Activated CD8-positive, alpha-beta T cell treated with anti-CD3 and anti-CD28 coated beads for 36 hours (primary cell): ENCODE measurements at regions of chr9 and their contacts with region 1.

Region 1: GRCh38 chr9:125558453-125559092 is 148.4 kb downstream of the MAPKAP1 start:
- DNase-seq: peak; percentile 77
- ATAC-seq: peak; percentile 84
- H3K4me3 Mint-ChIP-seq: no peak overlapping the region
- H3K27ac Mint-ChIP-seq: no peak overlapping the region
- H3K4me1 Mint-ChIP-seq: peaks cover 17% of the 10 kb centered on the region
- H3K27me3 Mint-ChIP-seq: no peaks in the 10 kb centered on the region
- CTCF ChIP-seq: peak; percentile 86

Region 2: DNA sequence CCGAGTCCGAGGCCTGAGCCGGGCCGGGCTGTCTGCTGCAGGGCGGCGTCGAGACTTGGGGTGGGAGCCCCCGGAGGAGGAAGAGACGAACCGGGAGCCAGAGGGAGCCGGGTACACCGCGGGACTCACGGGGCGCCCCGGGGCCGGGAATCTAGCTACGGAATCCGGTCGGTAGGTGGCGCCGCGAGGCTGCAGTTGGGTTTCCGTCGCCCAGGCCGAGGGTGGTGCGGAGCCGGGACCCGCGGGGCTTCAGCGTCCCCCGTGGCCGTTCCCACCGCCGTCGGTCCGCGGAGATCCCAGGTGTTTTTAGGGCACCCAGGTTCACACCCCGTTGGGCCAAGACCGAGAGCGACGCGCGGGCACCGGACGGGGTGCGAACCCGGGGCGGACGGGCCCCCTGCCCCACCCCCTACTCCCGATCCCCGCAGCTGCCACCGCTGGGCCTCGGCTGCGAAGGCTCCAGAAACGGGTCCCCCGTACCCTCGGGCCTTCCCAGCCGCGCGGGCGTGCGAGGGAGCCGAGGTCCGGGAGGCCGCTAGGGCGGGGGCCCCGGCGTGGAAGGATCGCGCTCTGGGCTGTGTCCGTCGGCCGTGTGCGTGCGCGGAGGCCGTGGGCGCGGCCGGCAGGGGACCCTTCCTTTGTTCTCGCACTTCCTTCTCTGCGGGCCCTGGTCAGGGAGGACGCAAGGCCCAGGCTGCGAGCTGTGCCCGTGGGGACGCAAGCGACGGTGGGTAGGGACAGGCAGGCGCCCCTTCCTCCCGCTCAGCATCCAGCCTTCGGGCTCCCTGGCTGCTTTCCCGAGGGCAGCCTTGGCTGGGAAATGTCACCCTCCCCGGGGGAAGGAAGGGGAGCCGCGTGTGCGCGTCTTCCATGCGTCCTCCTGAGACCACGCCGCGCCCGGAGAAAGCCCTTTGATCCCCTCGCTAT is 150.3 kb before region 1 on chr9:
- CTCF ChIA-PET with region 1: interaction called, 11 read pairs
- POLR2A ChIA-PET with region 1: no interaction called
- intact Hi-C with region 1: no loop called
- DNase-seq: peak; percentile 84
- ATAC-seq: peak; percentile 81
- H3K4me3 Mint-ChIP-seq: peak overlapping the region; percentile 59
- H3K27ac Mint-ChIP-seq: no peak overlapping the region
- H3K4me1 Mint-ChIP-seq: peaks cover 14% of the 10 kb centered on the region
- H3K27me3 Mint-ChIP-seq: peaks cover 16% of the 10 kb centered on the region
- CTCF ChIP-seq: peak; percentile 99

Region 3: DNA sequence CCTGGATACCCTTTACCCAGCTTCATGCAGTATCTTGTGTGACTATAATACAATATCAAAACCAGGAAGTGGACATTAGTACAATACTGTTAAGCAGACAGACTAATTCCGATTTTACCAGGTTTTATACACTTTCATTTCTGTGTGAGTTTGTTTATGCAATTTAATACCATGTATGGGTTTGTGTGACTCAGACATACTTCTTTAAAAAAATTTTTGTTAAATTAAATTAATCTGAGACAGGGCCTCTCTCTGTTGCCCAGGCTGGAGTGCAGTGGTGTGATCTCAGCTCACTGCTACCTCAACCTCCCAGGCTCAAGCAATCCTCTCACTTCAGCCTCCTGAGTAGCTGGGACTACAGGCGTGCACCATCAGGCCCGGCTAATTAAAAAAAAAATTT is 140.2 kb before region 1 on chr9:
- CTCF ChIA-PET with region 1: no interaction called
- POLR2A ChIA-PET with region 1: no interaction called
- intact Hi-C with region 1: no loop called
- DNase-seq: no peak
- ATAC-seq: no peak
- H3K4me3 Mint-ChIP-seq: no peak overlapping the region
- H3K27ac Mint-ChIP-seq: no peak overlapping the region
- H3K4me1 Mint-ChIP-seq: no peaks in the 10 kb centered on the region
- H3K27me3 Mint-ChIP-seq: no peaks in the 10 kb centered on the region
- CTCF ChIP-seq: no peak

Region 4: GRCh38 chr9:125529589-125530515 is 28.7 kb before region 1 on chr9:
- CTCF ChIA-PET with region 1: interaction called, 15 read pairs
- POLR2A ChIA-PET with region 1: no interaction called
- intact Hi-C with region 1: no loop called
- DNase-seq: no peak
- ATAC-seq: peak; percentile 47
- H3K4me3 Mint-ChIP-seq: no peak overlapping the region
- H3K27ac Mint-ChIP-seq: peak overlapping the region; percentile 6
- H3K4me1 Mint-ChIP-seq: peaks cover 48% of the 10 kb centered on the region
- H3K27me3 Mint-ChIP-seq: no peaks in the 10 kb centered on the region
- CTCF ChIP-seq: no peak

Region 5: GRCh38 chr9:125568621-125569020 is 10.0 kb after region 1 on chr9:
- CTCF ChIA-PET with region 1: interaction called, 20 read pairs
- POLR2A ChIA-PET with region 1: no interaction called
- intact Hi-C with region 1: no loop called
- DNase-seq: no peak
- ATAC-seq: no peak
- H3K4me3 Mint-ChIP-seq: no peak overlapping the region
- H3K27ac Mint-ChIP-seq: no peak overlapping the region
- H3K4me1 Mint-ChIP-seq: peaks cover 14% of the 10 kb centered on the region
- H3K27me3 Mint-ChIP-seq: no peaks in the 10 kb centered on the region
- CTCF ChIP-seq: no peak

Region 6: DNA sequence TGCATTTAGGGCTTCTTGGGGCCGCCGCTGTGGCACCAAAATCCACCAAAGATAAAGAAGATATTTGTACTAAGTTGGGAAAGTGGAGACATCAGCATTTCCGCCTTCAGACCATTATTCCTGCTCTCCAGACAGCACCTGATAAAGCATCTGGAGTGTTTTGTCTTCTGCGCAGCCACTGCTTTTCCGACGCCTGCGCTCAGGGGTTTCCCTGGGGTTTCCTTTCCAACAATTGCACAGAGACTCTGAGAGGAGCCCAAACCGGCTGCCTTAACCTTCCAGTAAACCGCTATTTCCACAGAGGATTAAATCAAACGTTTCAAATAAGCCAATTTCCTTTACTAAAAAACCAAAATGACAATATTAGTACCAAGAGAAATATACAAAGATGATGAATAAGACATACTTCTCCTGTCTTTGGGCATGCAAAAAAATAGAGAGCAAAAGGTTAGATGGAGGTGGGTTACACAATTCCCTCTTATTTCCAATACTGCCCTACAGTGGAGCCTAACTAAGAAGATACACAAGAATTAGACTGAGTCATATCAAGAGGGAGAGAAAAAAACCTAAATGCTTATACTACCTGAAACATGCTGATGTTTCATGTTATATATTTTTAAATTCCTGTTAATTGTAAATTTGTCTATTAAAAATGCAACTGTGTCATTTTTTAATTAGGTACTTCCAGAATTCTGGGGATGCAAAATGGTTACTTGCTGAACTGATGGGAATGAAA is 50.1 kb after region 1 on chr9:
- CTCF ChIA-PET with region 1: no interaction called
- POLR2A ChIA-PET with region 1: no interaction called
- intact Hi-C with region 1: no loop called
- DNase-seq: no peak
- ATAC-seq: no peak
- H3K4me3 Mint-ChIP-seq: no peak overlapping the region
- H3K27ac Mint-ChIP-seq: peak overlapping the region; percentile 82
- H3K4me1 Mint-ChIP-seq: peaks cover 41% of the 10 kb centered on the region
- H3K27me3 Mint-ChIP-seq: no peaks in the 10 kb centered on the region
- CTCF ChIP-seq: no peak

Region 7: DNA sequence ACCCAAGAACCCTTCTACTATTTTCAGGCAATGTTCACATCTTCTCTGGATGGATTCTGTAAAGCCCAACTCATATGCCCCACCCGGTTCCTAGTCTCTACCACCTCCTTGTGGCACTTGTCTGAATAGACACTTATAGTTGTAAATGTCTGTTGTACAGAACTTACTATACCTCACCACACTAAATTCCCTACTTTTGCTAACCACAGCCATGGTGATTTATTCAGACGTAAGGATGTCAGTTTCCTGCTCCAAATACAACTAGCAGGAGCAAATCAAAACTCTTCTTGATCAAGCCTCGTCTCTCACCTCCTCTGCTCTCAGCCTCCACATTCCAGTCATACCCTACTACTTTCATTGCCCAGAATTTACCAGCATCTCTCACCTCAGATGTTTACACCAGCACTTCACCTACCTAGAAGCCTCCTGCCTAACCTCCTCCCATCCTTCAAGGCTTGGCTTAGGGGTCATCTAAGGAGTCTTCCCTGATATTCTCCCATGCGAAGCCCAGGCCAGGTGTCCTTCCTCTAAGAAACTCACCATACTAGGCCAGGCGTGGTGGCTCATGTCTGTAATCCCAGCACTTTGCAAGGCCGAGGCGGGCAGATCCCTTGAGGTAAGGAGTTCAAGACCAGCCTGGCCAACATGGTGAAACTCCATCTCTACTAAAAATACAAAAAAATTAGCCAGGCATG is 73.0 kb after region 1 on chr9:
- CTCF ChIA-PET with region 1: interaction called, 15 read pairs
- POLR2A ChIA-PET with region 1: no interaction called
- intact Hi-C with region 1: loop called (anchors 2 kb)
- DNase-seq: peak; percentile 48
- ATAC-seq: peak; percentile 50
- H3K4me3 Mint-ChIP-seq: no peak overlapping the region
- H3K27ac Mint-ChIP-seq: peak overlapping the region; percentile 74
- H3K4me1 Mint-ChIP-seq: peaks cover 80% of the 10 kb centered on the region
- H3K27me3 Mint-ChIP-seq: no peaks in the 10 kb centered on the region
- CTCF ChIP-seq: peak; percentile 80

Region 8: DNA sequence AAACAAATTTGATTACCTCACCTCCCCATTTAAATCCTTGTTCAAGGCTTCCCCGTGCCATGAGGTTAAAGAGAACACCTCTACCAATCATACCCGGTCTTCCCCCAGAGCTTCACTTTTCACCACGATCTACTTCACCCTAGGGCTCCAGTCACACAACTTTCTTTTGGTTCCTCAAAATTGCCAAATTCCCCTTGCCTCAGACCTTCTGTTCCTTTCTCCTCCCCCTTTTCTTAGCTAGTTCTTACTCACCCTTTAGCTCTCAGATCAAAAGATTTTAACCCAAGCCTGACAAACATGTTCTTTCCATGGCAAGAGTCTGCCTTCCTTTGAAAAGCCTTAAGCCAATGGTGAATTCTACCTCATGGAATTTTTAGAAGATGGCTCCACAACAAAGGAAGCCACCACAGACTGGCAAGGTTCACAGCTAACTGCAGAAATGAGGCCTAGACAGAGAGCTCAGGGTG is 91.7 kb after region 1 on chr9:
- CTCF ChIA-PET with region 1: interaction called, 12 read pairs
- POLR2A ChIA-PET with region 1: no interaction called
- intact Hi-C with region 1: no loop called
- DNase-seq: peak; percentile 44
- ATAC-seq: peak; percentile 82
- H3K4me3 Mint-ChIP-seq: peak overlapping the region; percentile 36
- H3K27ac Mint-ChIP-seq: peak overlapping the region; percentile 86
- H3K4me1 Mint-ChIP-seq: peaks cover 75% of the 10 kb centered on the region
- H3K27me3 Mint-ChIP-seq: no peaks in the 10 kb centered on the region
- CTCF ChIP-seq: no peak

Region 9: DNA sequence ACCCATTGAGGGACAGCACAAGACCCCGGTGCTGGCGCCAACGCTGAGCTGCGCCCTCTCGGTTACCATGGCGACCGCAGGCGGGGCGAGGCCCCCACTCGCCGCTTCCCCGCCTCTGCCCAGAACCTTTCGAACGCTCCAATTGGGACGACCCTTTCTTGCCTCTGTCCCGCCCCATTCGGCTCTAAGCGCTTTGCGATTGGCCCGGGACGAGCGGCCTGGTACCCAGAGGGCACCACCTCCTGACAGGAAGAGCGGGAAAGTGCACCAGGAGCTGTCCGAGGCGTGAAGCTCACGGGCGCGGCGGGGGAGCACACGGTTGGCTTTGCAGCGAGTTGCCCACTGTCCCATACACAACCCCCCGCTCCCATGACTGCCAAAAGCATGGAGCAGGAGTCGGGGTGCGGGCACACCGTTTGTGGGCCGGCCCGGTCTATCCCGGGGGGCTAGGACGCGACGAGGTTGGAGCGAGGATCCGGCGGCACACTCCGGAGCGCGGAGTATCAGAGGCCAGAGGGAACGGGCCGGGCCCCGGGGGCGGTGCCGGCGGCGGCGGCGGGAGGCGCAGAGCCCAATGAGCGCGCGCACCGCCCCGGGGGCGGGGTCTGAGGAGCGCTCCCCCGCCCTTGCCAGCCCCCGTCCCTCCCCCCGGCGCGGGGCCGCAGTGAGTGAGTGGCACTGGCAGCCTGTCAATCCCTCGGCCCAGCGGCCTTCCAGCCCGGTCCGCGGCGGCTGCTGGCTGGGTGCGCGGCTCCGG is 187.6 kb after region 1 on chr9:
- CTCF ChIA-PET with region 1: interaction called, 15 read pairs
- POLR2A ChIA-PET with region 1: no interaction called
- intact Hi-C with region 1: no loop called
- DNase-seq: peak; percentile 92
- ATAC-seq: peak; percentile 85
- H3K4me3 Mint-ChIP-seq: peak overlapping the region; percentile 87
- H3K27ac Mint-ChIP-seq: peak overlapping the region; percentile 92
- H3K4me1 Mint-ChIP-seq: peaks cover 29% of the 10 kb centered on the region
- H3K27me3 Mint-ChIP-seq: peaks cover 3% of the 10 kb centered on the region
- CTCF ChIP-seq: no peak